Activated CD4-positive, alpha-beta T cell treated with anti-CD3 and anti-CD28 coated beads for 36 hours (primary cell): ENCODE measurements at regions of chr3 and their contacts with region 1.

Region 1: GRCh38 chr3:35659768-35660167 is 20.4 kb downstream of the ARPP21 start:
- DNase-seq: peak; percentile 16
- ATAC-seq: no peak
- H3K4me3 Mint-ChIP-seq: no peak overlapping the region
- H3K27ac Mint-ChIP-seq: no peak overlapping the region
- H3K4me1 Mint-ChIP-seq: no peaks in the 10 kb centered on the region
- H3K27me3 Mint-ChIP-seq: peaks cover 4% of the 10 kb centered on the region

Region 2: DNA sequence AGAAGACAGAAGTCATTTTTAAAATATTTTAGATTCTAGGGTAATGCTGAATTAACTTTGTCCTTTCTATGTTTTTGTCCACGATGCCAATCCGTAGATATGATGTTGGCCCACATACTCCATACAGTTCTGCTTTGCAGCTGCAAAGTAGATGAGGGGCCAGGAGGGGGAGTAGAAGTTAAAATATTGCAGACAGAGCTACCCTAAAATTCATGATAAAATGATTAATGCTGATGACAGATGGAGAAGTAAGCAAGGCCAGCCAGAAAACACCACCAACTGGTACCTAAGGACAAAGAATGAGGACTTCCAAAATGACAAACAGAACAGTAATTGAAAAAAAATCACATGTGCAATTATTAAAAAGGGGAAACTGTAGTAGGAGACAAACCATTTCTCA is 777.0 kb before region 1 on chr3:
- CTCF ChIA-PET with region 1: no interaction called
- POLR2A ChIA-PET with region 1: no interaction called
- intact Hi-C with region 1: loop called in 1 of 2 experiments (anchors 10 kb)
- DNase-seq: no peak
- ATAC-seq: no peak
- H3K4me3 Mint-ChIP-seq: no peak overlapping the region
- H3K27ac Mint-ChIP-seq: no peak overlapping the region
- H3K4me1 Mint-ChIP-seq: no peaks in the 10 kb centered on the region
- H3K27me3 Mint-ChIP-seq: no peaks in the 10 kb centered on the region

Region 3: DNA sequence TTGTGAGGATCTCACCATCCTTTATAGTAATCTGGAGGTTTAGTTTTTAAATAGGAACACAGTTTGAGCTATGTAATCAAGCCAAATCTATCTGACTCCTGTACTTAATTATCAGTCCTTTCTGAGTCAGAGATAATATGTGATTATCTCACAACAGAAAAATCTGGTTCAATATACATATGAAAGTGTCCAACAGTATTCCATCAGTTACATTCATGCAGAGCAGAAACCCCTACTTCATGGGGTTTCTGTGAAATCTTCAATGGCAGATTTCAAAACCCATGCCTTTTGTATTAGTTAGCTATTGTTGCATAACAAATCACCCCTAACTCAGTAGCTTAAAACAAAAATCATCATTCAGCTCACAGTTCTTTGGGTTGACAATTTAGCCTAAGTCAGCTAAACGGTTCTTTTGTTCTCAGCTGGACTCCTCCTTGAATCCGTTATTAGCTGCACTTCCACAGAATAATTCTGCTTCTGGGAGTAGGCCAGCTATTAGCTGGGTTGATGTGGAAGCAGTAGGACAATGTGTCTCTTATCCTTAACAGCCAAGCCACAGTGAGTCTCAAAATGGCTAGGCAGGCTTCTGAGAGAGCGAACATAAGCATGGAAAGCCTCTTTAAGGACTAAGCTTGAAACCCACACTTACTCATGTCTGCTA is 63.3 kb before region 1 on chr3:
- CTCF ChIA-PET with region 1: no interaction called
- POLR2A ChIA-PET with region 1: no interaction called
- intact Hi-C with region 1: no loop called
- DNase-seq: no peak
- ATAC-seq: no peak
- H3K4me3 Mint-ChIP-seq: no peak overlapping the region
- H3K27ac Mint-ChIP-seq: no peak overlapping the region
- H3K4me1 Mint-ChIP-seq: no peaks in the 10 kb centered on the region
- H3K27me3 Mint-ChIP-seq: no peaks in the 10 kb centered on the region